Activated B cell treated with CpG ODN at 0.5 μM for 24 hours (primary cell): ENCODE measurements at regions of chr14 and their contacts with region 1.

Region 1: GRCh38 chr14:74860906-74861733 is 14.8 kb downstream of the PROX2 start:
- DNase-seq: peak; percentile 82
- ATAC-seq: peak; percentile 74
- H3K4me3 Mint-ChIP-seq: no peak overlapping the region
- H3K27ac Mint-ChIP-seq: no peak overlapping the region
- H3K4me1 Mint-ChIP-seq: peaks cover 6% of the 10 kb centered on the region
- H3K27me3 Mint-ChIP-seq: no peaks in the 10 kb centered on the region
- CTCF ChIP-seq: no peak

Region 2: DNA sequence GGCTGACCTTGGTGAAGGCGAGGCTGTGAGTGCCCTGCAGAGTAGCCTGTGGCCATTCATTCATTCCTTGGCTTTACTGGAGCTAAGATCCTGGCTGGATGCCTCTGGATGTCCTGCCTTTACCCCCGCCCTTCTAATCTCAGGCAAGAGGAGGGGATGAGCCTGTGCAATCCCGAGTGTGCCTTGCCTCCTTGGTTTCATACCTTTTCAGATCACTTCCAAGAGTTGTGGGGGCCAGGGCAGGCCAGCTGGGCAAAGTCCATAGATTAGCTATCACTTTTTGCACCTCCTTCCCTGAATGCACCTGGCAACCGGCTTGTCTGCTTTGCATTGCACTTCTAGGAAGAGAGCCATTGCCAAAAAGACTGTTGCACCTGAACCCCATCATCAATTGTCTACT is 511.4 kb before region 1 on chr14:
- CTCF ChIA-PET with region 1: no interaction called
- POLR2A ChIA-PET with region 1: no interaction called
- intact Hi-C with region 1: no loop called
- DNase-seq: no peak
- ATAC-seq: no peak
- H3K4me3 Mint-ChIP-seq: no peak overlapping the region
- H3K27ac Mint-ChIP-seq: no peak overlapping the region
- H3K4me1 Mint-ChIP-seq: no peaks in the 10 kb centered on the region
- H3K27me3 Mint-ChIP-seq: peaks cover 6% of the 10 kb centered on the region
- CTCF ChIP-seq: no peak

Region 3: GRCh38 chr14:74836251-74836960 is 24.7 kb before region 1 on chr14:
- CTCF ChIA-PET with region 1: interaction called, 14 read pairs
- POLR2A ChIA-PET with region 1: interaction called, 3 read pairs
- intact Hi-C with region 1: no loop called
- DNase-seq: no peak
- ATAC-seq: no peak
- H3K4me3 Mint-ChIP-seq: peak overlapping the region; percentile 44
- H3K27ac Mint-ChIP-seq: peak overlapping the region; percentile 86
- H3K4me1 Mint-ChIP-seq: peaks cover 66% of the 10 kb centered on the region
- H3K27me3 Mint-ChIP-seq: no peaks in the 10 kb centered on the region
- CTCF ChIP-seq: no peak

Region 4: GRCh38 chr14:74875941-74876913 is 15.1 kb after region 1 on chr14 and contains the start of gene PROX2:
- CTCF ChIA-PET with region 1: interaction called, 24 read pairs
- POLR2A ChIA-PET with region 1: no interaction called
- intact Hi-C with region 1: no loop called
- DNase-seq: no peak
- ATAC-seq: peak; percentile 57
- H3K4me3 Mint-ChIP-seq: peak within 1 kb of the TSS; percentile 28
- H3K27ac Mint-ChIP-seq: no peak within 1 kb of the TSS
- H3K4me1 Mint-ChIP-seq: peaks cover 26% of the 10 kb centered on the region
- H3K27me3 Mint-ChIP-seq: no peaks in the 10 kb centered on the region
- CTCF ChIP-seq: no peak
- total RNA-seq, gene PROX2: 0.07 TPM in 1 of 2 replicates, not detected in the other

Region 5: GRCh38 chr14:74893614-74894091 is 32.5 kb after region 1 on chr14:
- CTCF ChIA-PET with region 1: interaction called, 36 read pairs
- POLR2A ChIA-PET with region 1: interaction called, 3 read pairs
- intact Hi-C with region 1: no loop called
- DNase-seq: no peak
- ATAC-seq: peak; percentile 43
- H3K4me3 Mint-ChIP-seq: peak overlapping the region; percentile 29
- H3K27ac Mint-ChIP-seq: peak overlapping the region; percentile 83
- H3K4me1 Mint-ChIP-seq: peaks cover 31% of the 10 kb centered on the region
- H3K27me3 Mint-ChIP-seq: no peaks in the 10 kb centered on the region
- CTCF ChIP-seq: no peak

Region 6: DNA sequence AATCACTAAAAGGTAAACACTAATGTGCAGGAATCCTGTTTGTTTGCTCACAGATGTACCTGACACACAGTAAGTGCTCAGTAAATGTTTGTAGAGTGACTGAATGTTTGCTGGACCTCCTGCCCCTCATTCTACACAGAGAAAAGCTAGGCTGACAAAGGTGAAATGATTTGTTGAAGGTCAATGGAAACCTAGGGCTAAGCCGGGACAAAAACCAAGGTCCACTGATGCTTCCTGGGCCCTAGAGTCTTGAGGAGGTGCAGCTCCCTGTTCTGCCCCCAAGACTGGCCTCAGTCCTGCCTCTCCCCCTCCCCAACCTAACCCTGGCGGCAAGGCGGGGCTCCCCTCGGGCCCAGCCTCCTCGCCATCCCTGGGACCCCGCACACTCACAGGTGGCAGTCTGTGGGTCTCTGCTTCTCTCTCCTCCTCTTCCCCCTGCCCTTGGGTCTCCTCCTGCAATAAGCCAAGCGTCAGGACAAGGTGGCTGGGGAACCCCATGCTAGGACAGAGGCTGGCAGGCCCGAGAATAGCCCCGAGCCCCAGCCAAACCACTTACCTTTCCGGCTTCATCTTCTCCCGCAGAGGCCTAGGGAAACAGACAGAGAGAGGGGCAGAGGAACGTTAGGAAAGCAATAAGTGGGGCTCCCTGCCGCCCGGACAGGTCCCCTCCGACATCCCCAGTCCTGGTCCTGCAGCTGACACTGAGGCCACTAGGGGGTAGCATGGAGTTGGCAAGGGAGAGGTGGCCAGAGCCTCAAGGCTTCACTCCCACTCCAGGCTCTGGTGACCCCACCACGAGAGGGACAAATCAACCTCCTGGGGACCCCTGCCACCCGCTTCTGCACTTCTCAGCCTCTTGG is 84.9 kb after region 1 on chr14:
- CTCF ChIA-PET with region 1: interaction called, 8 read pairs
- POLR2A ChIA-PET with region 1: interaction called, 5 read pairs
- intact Hi-C with region 1: loop called (anchors 5 kb)
- DNase-seq: peak; percentile 61
- ATAC-seq: peak; percentile 67
- H3K4me3 Mint-ChIP-seq: no peak overlapping the region
- H3K27ac Mint-ChIP-seq: peak overlapping the region; percentile 46
- H3K4me1 Mint-ChIP-seq: peaks cover 34% of the 10 kb centered on the region
- H3K27me3 Mint-ChIP-seq: peaks cover 2% of the 10 kb centered on the region
- CTCF ChIP-seq: no peak

Region 7: DNA sequence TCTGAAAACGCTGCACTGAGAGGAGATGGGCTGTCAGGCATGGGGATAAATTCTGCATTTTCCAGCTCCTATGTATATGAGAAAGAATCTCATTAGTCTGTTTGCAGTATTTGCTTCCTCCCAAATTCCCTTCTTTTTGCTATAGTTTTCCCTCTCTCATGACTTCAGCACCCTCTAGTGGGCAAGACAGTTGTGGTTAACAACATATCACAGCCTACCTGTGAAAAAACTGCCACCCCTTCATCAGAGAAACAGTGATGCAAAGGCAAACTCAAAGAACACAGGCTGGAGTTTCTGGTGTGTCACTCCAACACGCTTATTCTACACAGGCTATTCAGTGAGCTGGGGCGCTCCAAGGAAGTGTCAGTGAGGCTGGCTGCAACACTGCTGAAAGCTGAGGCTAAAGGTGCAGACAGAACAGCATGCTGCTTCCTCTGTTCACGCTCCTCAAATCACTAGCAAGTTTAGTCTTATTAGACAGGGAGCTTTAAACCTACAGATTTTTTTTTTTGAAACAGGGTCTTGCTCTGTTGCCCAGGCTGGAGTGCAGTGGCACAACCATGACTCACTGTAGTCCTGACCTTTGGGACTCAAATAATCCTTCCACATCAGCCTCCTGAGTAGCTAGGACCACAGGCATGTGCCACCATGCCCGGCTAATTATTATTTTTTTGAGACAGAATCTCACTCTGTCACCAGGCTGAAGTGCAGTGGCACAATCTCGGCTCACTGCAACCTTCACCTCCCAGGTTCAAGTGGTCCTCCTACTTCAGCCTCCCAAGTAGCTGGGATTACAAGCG is 227.7 kb after region 1 on chr14:
- CTCF ChIA-PET with region 1: interaction called, 111 read pairs
- POLR2A ChIA-PET with region 1: interaction called, 3 read pairs
- intact Hi-C with region 1: loop called (anchors 1 kb)
- DNase-seq: no peak
- ATAC-seq: peak; percentile 37
- H3K4me3 Mint-ChIP-seq: no peak overlapping the region
- H3K27ac Mint-ChIP-seq: no peak overlapping the region
- H3K4me1 Mint-ChIP-seq: no peaks in the 10 kb centered on the region
- H3K27me3 Mint-ChIP-seq: no peaks in the 10 kb centered on the region
- CTCF ChIP-seq: peak; percentile 72